SK-N-SH (cell line): ENCODE measurements at regions of chr15 and their contacts with region 1.

Region 1: GRCh38 chr15:77633134-77633912 is 611 bp upstream of the LINGO1 start:
- DNase-seq: peak; percentile 97
- H3K4me3 ChIP-seq: peak overlapping the region; percentile 47 to 66
- H3K27ac ChIP-seq: peak overlapping the region in 1 of 2 experiments; percentile 11; a peak in 1 of 4 replicates
- H3K4me1 ChIP-seq: peaks cover 0 to 40% of the 10 kb centered on the region in 2 experiments; a peak in 2 of 4 replicates
- H3K27me3 ChIP-seq: peaks cover 56% of the 10 kb centered on the region
- CTCF ChIP-seq: peak; percentile 98
- EP300 ChIP-seq: no peak
- RAD21 ChIP-seq: peak; percentile 85

Region 2: GRCh38 chr15:77496710-77497103 is 136.6 kb before region 1 on chr15:
- CTCF ChIA-PET with region 1: interaction called, 10 read pairs
- POLR2A ChIA-PET with region 1: no interaction called
- DNase-seq: peak; percentile 81
- H3K4me3 ChIP-seq: peak overlapping the region; percentile 15 to 54; a peak in 2 of 4 replicates
- H3K27ac ChIP-seq: peak overlapping the region; percentile 75 to 98
- H3K4me1 ChIP-seq: peaks cover 47 to 49% of the 10 kb centered on the region in 2 experiments
- H3K27me3 ChIP-seq: no peaks in the 10 kb centered on the region
- CTCF ChIP-seq: peak; percentile 92
- EP300 ChIP-seq: 0 out of 4 replicates have a peak, but pooled peaks of 1 of the 2 experiments have one; percentile 6
- RAD21 ChIP-seq: peak; percentile 90

Region 3: DNA sequence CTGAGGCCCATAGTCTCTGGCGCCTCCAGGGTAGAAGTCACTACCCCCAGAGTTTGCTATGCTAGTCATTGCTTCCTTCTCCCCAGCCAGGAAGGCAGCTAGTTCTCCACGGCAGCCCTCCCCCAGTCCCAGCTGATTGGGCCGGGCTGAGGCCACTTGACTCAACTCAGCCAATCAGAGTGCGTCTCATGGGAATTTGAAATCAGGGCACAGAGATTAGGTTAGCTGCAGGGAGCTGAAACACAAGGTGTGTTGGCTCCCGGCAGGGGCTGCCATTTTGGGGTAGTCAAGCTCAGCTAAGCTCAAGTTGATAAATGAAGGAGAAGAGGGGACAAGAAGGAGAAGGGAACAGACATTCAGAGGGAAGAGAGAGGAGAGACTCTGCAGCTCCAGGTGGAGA is 33.4 kb before region 1 on chr15:
- CTCF ChIA-PET with region 1: interaction called, 99 read pairs
- POLR2A ChIA-PET with region 1: no interaction called
- DNase-seq: peak; percentile 68
- H3K4me3 ChIP-seq: no peak overlapping the region
- H3K27ac ChIP-seq: peak overlapping the region in 1 of 2 experiments; percentile 74; a peak in 1 of 4 replicates
- H3K4me1 ChIP-seq: peaks cover 0 to 62% of the 10 kb centered on the region in 2 experiments; a peak in 2 of 4 replicates
- H3K27me3 ChIP-seq: no peaks in the 10 kb centered on the region
- CTCF ChIP-seq: no peak
- EP300 ChIP-seq: no peak
- RAD21 ChIP-seq: no peak

Region 4: GRCh38 chr15:77659350-77660321 is 26.3 kb after region 1 on chr15:
- CTCF ChIA-PET with region 1: interaction called, 63 read pairs
- POLR2A ChIA-PET with region 1: no interaction called
- DNase-seq: peak; percentile 91
- H3K4me3 ChIP-seq: no peak overlapping the region
- H3K27ac ChIP-seq: no peak overlapping the region
- H3K4me1 ChIP-seq: peaks cover 0 to 8% of the 10 kb centered on the region in 2 experiments; a peak in 1 of 4 replicates
- H3K27me3 ChIP-seq: peaks cover 20% of the 10 kb centered on the region; the same call in 1 of the 2 replicates
- CTCF ChIP-seq: peak; percentile 46
- EP300 ChIP-seq: no peak
- RAD21 ChIP-seq: peak; percentile 67

Region 5: GRCh38 chr15:77784395-77785292 is 151.3 kb after region 1 on chr15:
- CTCF ChIA-PET with region 1: interaction called, 14 read pairs
- POLR2A ChIA-PET with region 1: no interaction called
- DNase-seq: peak; percentile 62
- H3K4me3 ChIP-seq: no peak overlapping the region
- H3K27ac ChIP-seq: no peak overlapping the region
- H3K4me1 ChIP-seq: no peaks in the 10 kb centered on the region
- H3K27me3 ChIP-seq: peaks cover 11% of the 10 kb centered on the region; the same call in 1 of the 2 replicates
- CTCF ChIP-seq: peak; percentile 51
- EP300 ChIP-seq: no peak
- RAD21 ChIP-seq: peak; percentile 47

Region 6: GRCh38 chr15:77851691-77852090 is 218.4 kb after region 1 on chr15:
- CTCF ChIA-PET with region 1: interaction called, 21 read pairs
- POLR2A ChIA-PET with region 1: no interaction called
- DNase-seq: peak; percentile 81
- H3K4me3 ChIP-seq: no peak overlapping the region
- H3K27ac ChIP-seq: no peak overlapping the region
- H3K4me1 ChIP-seq: peaks cover 0 to 8% of the 10 kb centered on the region in 2 experiments; a peak in 1 of 4 replicates
- H3K27me3 ChIP-seq: peaks cover 43% of the 10 kb centered on the region; the same call in 1 of the 2 replicates
- CTCF ChIP-seq: no peak
- EP300 ChIP-seq: no peak
- RAD21 ChIP-seq: no peak